ENCODE measurements at regions of chr19 and their contacts with region 1.

Region 1: GRCh38 chr19:39671738-39672363 is 16.1 kb downstream of the LGALS16 start:
- DNase-seq: no peak
- ATAC-seq: peak; percentile 80
- H3K4me3 ChIP-seq: no peak overlapping the region
- H3K27ac ChIP-seq: no peak overlapping the region
- H3K4me1 ChIP-seq: peaks cover 15% of the 10 kb centered on the region
- H3K27me3 ChIP-seq: no peaks in the 10 kb centered on the region
- CTCF ChIP-seq: peak; percentile 42 to 80 (median 66); a peak in 5 of 6 replicates
- EP300 ChIP-seq: no peak
- POLR2A ChIP-seq: no peak
- RAD21 ChIP-seq: peak; percentile 99

Region 2: DNA sequence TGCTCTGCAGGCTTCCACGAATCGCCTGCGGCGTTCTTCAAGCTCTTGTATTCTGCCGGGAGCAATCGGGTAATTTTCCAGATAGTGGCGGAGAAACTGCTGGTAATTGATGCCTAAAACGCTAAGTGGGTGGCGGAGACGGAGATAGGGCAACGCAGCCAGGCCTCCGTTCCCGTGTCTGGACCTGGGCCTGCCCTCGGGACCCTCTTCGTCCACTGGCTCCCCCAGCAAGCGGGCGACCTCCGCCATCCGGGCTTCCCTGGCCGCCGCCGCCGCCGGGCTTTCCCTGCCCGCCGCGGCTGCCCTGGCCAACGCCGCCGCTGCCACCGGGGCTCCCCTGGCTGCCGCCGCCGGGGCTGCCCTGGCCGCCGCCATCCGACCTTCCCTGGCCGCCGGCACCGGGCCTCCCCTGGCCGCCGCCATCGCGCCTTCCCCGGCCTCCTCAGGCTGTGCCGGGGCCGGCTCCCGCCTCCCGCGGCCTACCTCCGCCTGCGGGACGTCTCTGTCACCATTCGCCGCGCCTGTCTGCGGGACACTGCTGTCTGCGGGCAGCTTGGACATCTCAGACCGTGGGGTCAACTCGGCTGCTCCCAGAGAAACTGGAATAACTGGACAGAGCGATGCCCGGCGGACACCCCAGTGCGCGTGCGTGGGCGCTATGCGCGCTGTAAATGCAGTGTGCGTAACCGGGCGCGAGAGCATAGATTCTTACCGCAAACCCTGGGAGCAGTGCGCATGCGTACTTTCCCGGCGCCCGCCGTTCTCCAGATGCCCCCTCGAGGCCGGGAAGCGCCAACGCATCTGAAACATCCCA is 132.1 kb before region 1 on chr19 and contains the start of gene EID2:
- CTCF ChIA-PET with region 1: interaction called, 248 read pairs
- POLR2A ChIA-PET with region 1: interaction called, 4 read pairs
- RAD21 ChIA-PET with region 1: interaction called, 6 read pairs
- SMC1A ChIA-PET with region 1: interaction called, 9 read pairs
- in situ Hi-C with region 1: no loop called
- intact Hi-C with region 1: no loop called
- DNase-seq: peak; percentile 72
- ATAC-seq: peak; percentile 97
- H3K4me3 ChIP-seq: peak within 1 kb of the TSS; percentile 68
- H3K27ac ChIP-seq: peak within 1 kb of the TSS; percentile 80
- H3K4me1 ChIP-seq: peaks cover 9% of the 10 kb centered on the region
- H3K27me3 ChIP-seq: no peaks in the 10 kb centered on the region
- CTCF ChIP-seq: peak; percentile 89 to 95 (median 91)
- EP300 ChIP-seq: no peak
- POLR2A ChIP-seq: peak; percentile 87
- RAD21 ChIP-seq: peak; percentile 44; the same call in 1 of the 2 replicates
- polyA plus RNA-seq, gene EID2: 2.7 to 4.4 TPM

Region 3: DNA sequence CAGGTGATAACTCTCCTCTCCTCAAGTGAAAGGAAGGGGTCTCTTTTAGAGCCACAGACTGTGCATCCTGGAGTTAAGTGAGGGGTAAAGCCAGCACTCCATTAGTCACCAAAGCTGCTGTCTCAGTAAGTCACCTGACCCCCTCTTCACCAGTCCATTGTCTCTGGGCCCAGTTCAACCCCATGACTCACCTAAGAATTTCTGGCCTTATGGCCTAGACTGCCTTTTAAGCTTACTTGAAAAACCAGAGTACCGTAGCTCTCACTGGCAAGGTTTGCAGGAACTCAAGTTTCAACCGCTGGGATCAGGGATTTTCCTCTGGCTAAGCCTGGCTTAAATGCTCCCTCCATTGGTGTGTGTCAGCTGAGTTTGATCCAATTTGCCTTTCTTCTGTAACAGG is 108.4 kb before region 1 on chr19:
- CTCF ChIA-PET with region 1: interaction called, 26 read pairs
- POLR2A ChIA-PET with region 1: no interaction called
- RAD21 ChIA-PET with region 1: interaction called, 3 read pairs
- SMC1A ChIA-PET with region 1: interaction called, 20 read pairs
- in situ Hi-C with region 1: no loop called
- intact Hi-C with region 1: no loop called
- DNase-seq: no peak
- ATAC-seq: no peak
- H3K4me3 ChIP-seq: no peak overlapping the region
- H3K27ac ChIP-seq: no peak overlapping the region
- H3K4me1 ChIP-seq: peaks cover 11% of the 10 kb centered on the region
- H3K27me3 ChIP-seq: no peaks in the 10 kb centered on the region
- CTCF ChIP-seq: no peak
- EP300 ChIP-seq: no peak
- POLR2A ChIP-seq: no peak
- RAD21 ChIP-seq: no peak

Region 4: GRCh38 chr19:39643606-39644005 is 28.2 kb before region 1 on chr19:
- CTCF ChIA-PET with region 1: no interaction called
- POLR2A ChIA-PET with region 1: no interaction called
- RAD21 ChIA-PET with region 1: no interaction called
- SMC1A ChIA-PET with region 1: no interaction called
- in situ Hi-C with region 1: no loop called
- intact Hi-C with region 1: no loop called
- DNase-seq: no peak
- ATAC-seq: no peak
- H3K4me3 ChIP-seq: no peak overlapping the region
- H3K27ac ChIP-seq: no peak overlapping the region
- H3K4me1 ChIP-seq: no peaks in the 10 kb centered on the region
- H3K27me3 ChIP-seq: 0 out of 4 replicates have a peak, but pooled peaks cover 0 to 1% of the 10 kb centered on the region in 2 experiments
- CTCF ChIP-seq: no peak
- EP300 ChIP-seq: no peak
- POLR2A ChIP-seq: no peak
- RAD21 ChIP-seq: no peak

Region 5: GRCh38 chr19:39765091-39766076 is 93.5 kb after region 1 on chr19:
- CTCF ChIA-PET with region 1: interaction called, 136 read pairs
- POLR2A ChIA-PET with region 1: no interaction called
- RAD21 ChIA-PET with region 1: interaction called, 12 read pairs
- SMC1A ChIA-PET with region 1: interaction called, 129 read pairs
- in situ Hi-C with region 1: no loop called
- intact Hi-C with region 1: no loop called
- DNase-seq: no peak
- ATAC-seq: no peak
- H3K4me3 ChIP-seq: no peak overlapping the region
- H3K27ac ChIP-seq: no peak overlapping the region
- H3K4me1 ChIP-seq: peaks cover 5% of the 10 kb centered on the region
- H3K27me3 ChIP-seq: no peaks in the 10 kb centered on the region
- CTCF ChIP-seq: peak; percentile 29 to 79 (median 56); a peak in 5 of 6 replicates
- EP300 ChIP-seq: no peak
- POLR2A ChIP-seq: no peak
- RAD21 ChIP-seq: 0 out of 2 replicates have a peak, but pooled peaks have one; percentile 22

Region 6: DNA sequence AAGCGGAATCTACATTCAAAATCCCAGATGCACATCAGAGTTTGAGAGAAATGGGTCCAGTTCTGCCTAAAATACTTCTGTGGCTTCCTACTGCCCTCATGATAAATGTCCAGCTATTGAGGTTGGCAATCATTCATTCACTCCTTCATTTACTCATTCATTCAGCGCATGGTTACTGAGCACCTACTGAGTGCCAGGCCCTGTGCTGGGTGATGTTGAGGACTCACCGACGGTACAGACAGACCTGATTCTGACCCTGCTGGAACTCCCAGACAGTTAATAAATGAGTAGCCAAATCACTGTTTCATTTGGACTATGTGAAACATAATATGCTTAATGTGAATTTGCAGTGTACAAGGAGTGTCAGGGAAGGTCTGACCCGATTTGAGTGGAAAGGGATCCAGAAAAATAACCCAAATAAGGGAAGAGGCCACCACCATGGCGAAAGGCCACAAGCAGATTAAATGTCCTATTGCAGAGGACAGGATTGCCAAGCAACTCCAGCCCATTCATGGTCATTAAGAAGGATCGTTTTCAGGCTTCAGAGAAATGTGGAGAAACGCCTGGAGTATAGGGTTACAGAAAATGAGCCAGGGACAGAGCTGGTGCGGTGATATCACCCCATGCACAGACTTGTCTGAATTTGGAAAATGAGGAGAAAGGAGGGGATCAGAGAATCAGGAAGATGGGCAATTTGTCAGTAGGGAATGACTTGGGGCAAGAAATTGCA is 141.6 kb after region 1 on chr19:
- CTCF ChIA-PET with region 1: interaction called, 10 read pairs
- POLR2A ChIA-PET with region 1: interaction called, 3 read pairs
- RAD21 ChIA-PET with region 1: interaction called, 4 read pairs
- SMC1A ChIA-PET with region 1: interaction called, 32 read pairs
- in situ Hi-C with region 1: no loop called
- intact Hi-C with region 1: no loop called
- DNase-seq: no peak
- ATAC-seq: no peak
- H3K4me3 ChIP-seq: no peak overlapping the region
- H3K27ac ChIP-seq: no peak overlapping the region
- H3K4me1 ChIP-seq: peaks cover 21% of the 10 kb centered on the region
- H3K27me3 ChIP-seq: no peaks in the 10 kb centered on the region
- CTCF ChIP-seq: no peak
- EP300 ChIP-seq: no peak
- POLR2A ChIP-seq: no peak
- RAD21 ChIP-seq: no peak

Region 7: DNA sequence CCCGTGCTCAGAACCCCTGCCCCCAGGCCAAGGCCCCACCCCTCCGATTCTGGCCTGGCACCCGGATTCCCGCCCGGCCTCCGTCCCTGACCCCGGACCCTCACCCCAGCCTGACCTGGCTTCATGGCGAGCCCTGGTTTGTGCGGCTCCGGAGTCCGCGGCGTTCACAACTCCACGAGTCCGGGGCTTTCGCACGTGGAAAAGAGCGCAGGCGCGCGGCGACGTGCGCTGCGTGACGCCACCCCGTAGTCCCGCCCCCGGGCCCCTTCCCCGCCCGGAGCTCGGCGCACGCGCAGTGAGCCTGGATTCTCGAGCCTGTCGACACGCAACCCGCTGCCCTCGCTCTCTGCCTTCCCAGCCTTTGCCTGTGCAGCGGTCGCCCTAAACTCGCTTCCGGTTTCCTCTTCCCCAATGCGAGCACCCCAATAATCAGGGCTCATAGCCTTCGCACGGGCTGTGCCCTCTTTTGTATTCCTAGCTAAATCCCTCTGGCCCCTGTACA is 174.4 kb after region 1 on chr19 and contains the start of gene FBL:
- CTCF ChIA-PET with region 1: interaction called, 335 read pairs
- POLR2A ChIA-PET with region 1: interaction called, 25 read pairs
- RAD21 ChIA-PET with region 1: interaction called, 234 read pairs
- SMC1A ChIA-PET with region 1: interaction called, 266 read pairs
- in situ Hi-C with region 1: no loop called
- intact Hi-C with region 1: loop called (anchors 1 kb)
- DNase-seq: peak; percentile 82
- ATAC-seq: peak; percentile 94
- H3K4me3 ChIP-seq: peak within 1 kb of the TSS; percentile 70
- H3K27ac ChIP-seq: peak within 1 kb of the TSS; percentile 81
- H3K4me1 ChIP-seq: peaks cover 15% of the 10 kb centered on the region
- H3K27me3 ChIP-seq: no peaks in the 10 kb centered on the region
- CTCF ChIP-seq: no peak
- EP300 ChIP-seq: no peak
- POLR2A ChIP-seq: peak; percentile 93
- RAD21 ChIP-seq: no peak
- polyA plus RNA-seq, gene FBL: 156 to 460 TPM

Region 8: DNA sequence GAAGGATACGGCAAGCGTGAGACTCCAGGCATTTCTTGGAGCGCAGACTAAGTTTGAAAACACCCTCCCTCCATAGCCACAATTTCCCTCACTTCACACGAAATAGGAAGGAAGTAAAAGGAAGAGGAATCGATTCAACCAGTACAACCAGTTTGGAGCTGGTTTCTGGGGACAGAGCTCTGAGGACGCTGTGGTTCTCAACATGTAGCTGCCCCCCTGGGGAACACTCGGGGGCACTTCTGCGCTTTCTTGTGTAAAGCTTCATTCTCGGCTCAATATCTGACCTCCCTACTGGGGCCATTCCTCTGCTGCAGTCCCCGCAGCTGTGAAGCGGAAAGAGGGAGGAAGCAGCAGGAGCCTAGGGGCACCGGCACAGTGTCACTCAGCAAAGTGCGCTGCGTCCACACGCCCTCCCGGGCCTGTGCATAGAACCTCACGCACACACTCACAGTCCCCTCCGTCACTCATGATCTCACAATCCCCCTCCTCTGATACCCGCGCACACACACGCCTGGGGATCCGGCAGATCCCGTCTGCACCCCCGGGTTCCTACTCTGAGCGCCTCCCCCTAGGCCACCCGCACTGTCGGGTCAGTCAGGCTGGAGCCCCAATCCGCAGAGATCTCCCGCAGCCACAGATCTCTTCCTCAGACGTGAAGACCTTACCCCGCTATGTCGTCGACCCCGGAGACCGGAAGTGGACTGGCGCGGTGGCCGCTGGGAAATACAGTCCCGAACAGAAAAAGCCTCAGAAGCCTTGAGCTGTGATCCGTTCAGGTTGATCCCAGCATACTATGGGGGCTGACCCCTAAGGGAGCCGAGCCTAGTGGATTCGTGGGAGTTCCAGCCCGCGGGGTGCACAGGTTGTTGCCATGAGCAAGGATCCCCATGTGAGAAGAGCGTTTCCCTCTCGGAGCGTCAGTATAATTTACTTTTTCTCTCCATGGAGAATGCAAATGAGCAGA is 418.7 kb after region 1 on chr19 and contains the start of gene ZNF780A:
- CTCF ChIA-PET with region 1: no interaction called
- POLR2A ChIA-PET with region 1: no interaction called
- RAD21 ChIA-PET with region 1: no interaction called
- SMC1A ChIA-PET with region 1: no interaction called
- in situ Hi-C with region 1: no loop called
- intact Hi-C with region 1: no loop called
- DNase-seq: peak; percentile 48
- ATAC-seq: peak; percentile 94
- H3K4me3 ChIP-seq: peak within 1 kb of the TSS; percentile 95
- H3K27ac ChIP-seq: peak within 1 kb of the TSS; percentile 77
- H3K4me1 ChIP-seq: peaks cover 4% of the 10 kb centered on the region; the same call in 1 of the 2 replicates
- H3K27me3 ChIP-seq: no peaks in the 10 kb centered on the region
- CTCF ChIP-seq: no peak
- EP300 ChIP-seq: peak in 1 of 2 experiments; percentile 33; a peak in 1 of 4 replicates
- POLR2A ChIP-seq: peak; percentile 90
- RAD21 ChIP-seq: no peak
- polyA plus RNA-seq, gene ZNF780A: 19.6 to 27.6 TPM

Measured in GM12878 (cell line).